ENCODE measurements at regions of chr1 and their contacts with region 1.

Region 1: DNA sequence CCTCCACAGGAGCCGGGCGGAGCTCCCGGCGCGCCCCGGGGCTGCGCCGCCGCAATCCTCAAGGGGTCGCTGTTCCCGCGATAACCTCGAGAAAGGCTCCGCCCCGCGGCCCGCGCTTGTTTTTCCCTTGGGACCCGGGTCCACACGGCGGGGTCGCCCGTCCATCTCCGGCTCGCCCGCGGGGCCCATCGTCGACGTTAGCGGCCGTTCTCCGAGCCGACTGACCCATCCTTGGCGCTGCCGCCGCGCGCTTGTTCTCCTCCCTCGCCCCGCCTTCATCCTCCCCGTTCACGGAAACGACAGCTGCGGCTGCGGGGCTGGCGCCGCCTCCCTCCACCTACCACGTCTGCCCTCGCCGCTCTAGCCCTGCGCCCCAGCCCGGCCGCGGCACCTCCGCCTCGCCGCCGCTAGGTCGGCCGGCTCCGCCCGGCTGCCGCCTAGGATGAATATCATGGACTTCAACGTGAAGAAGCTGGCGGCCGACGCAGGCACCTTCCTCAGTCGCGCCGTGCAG is at the start of gene SH3GLB1:
- DNase-seq: peak; percentile 97
- H3K4me3 Mint-ChIP-seq: peak within 1 kb of the TSS; percentile 100
- H3K27ac Mint-ChIP-seq: peak within 1 kb of the TSS; percentile 99
- H3K4me1 Mint-ChIP-seq: peaks cover 33% of the 10 kb centered on the region
- H3K27me3 Mint-ChIP-seq: no peaks in the 10 kb centered on the region
- total RNA-seq, gene SH3GLB1: 57.0 and 59.7 TPM in 2 replicates

Region 2: GRCh38 chr1:86395771-86396497 is 308.6 kb before region 1 on chr1 and contains the start of gene ODF2L:
- intact Hi-C with region 1: loop called (anchors 1 kb)
- DNase-seq: peak; percentile 97
- H3K4me3 Mint-ChIP-seq: peak within 1 kb of the TSS; percentile 94
- H3K27ac Mint-ChIP-seq: peak within 1 kb of the TSS; percentile 98
- H3K4me1 Mint-ChIP-seq: peaks cover 37% of the 10 kb centered on the region
- H3K27me3 Mint-ChIP-seq: peaks cover 13% of the 10 kb centered on the region
- total RNA-seq, gene ODF2L: 16.0 and 23.3 TPM in 2 replicates

Region 3: DNA sequence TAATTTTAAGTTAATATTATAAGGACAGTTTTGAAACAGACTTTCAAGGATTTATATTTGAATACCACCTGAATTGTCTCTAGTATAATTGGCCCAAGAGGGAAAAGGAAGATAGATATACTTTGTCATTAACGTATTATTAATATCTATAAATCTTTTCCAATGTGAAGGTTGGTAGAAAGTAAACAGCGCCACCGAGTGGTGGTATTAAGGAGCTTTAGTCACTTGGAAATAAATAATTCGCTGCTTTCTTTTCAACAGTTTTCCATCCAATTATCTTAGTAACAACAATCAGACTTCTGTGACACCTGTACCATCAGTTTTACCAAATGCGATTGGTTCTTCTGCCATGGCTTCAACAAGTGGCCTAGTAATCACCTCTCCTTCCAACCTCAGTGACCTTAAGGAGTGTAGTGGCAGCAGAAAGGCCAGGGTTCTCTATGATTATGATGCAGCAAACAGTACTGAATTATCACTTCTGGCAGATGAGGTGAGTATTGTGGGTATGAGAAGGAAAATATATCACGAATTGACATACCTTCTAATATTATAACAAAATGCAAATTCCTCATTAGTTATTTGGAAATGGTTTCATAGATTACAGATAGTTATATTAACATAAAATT is 37.5 kb after region 1 on chr1:
- intact Hi-C with region 1: loop called (anchors 1 kb)
- DNase-seq: peak; percentile 72
- H3K4me3 Mint-ChIP-seq: no peak overlapping the region
- H3K27ac Mint-ChIP-seq: no peak overlapping the region
- H3K4me1 Mint-ChIP-seq: peaks cover 4% of the 10 kb centered on the region
- H3K27me3 Mint-ChIP-seq: no peaks in the 10 kb centered on the region

Region 4: DNA sequence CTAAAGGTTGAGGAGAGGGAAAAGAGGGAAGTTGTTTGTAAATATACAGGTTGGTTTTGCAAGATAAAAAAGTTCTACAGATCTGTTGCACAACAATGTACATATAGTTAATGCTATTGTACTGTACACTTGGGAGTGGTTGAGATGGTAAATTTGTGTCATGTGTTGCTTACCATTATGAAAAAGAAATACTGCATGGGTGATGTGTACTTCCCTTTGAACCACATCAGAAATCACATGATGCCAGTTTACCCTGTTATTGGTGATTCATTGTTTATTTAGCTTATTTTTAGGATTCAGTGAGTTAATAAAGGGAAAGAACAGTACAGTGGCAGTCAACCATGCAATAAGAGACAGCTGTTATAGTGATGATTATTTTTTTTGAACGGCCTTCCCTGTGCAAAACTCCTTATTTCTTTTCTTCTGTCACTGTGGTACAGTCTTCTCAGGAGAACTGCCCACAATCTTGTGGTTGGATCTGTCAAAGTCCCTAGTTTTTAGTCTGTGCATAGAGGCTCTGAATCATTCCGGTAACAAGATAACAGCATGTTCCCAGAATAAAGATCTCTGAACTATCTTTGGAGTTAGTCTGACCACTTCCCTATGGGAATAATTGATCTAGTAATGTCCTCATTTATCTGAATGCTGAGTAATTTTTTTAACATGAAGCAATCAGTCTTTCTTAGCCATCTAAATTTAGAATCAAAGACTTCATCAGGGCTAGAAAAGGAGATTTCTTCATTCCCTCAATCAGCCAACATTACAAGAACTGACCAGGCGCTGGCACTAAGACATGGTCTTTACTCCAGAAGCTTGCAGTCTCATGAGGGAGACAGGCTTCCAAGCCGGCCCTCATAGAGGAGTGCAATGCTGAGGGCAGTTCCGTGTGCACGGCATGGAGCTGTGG is 84.0 kb after region 1 on chr1:
- intact Hi-C with region 1: no loop called
- DNase-seq: no peak
- H3K4me3 Mint-ChIP-seq: no peak overlapping the region
- H3K27ac Mint-ChIP-seq: no peak overlapping the region
- H3K4me1 Mint-ChIP-seq: peaks cover 4% of the 10 kb centered on the region
- H3K27me3 Mint-ChIP-seq: no peaks in the 10 kb centered on the region

Region 5: DNA sequence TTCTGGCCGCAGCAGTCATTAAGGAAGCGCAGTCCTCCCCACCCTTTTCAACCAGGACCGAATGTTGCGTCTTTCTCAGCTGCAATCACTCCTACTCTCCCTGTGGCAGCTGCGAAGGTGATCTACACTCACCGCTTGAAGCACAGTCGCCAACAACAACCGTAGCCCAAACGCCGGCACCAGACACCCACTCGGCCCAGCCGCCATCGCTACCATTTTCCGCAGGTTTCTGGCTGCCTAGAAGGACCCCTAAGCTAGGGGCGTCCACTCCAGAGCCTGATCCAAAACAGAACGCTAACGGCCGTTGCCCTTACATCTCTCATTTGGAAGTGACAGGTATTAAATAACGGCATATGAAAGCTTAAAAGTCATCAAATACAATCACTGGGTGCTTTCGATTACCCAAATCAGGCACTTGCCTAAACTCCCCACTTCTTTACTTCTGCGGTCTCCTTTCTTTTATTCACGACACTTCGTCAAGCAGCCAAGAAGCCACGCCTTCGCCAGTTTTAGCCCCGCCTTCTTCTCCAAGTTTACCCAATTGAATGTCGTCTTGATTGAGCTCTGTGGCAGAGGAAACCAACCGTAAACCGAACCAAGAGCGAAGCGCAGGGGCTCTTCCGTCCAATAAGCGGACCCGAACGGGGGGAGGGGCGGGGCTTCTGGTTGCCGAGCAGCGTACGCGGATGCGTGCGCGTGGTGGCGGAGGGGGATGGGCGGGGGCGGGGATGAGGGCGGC is 209.6 kb after region 1 on chr1 and contains the start of gene SELENOF:
- intact Hi-C with region 1: loop called (anchors 1 kb)
- DNase-seq: peak; percentile 100
- H3K4me3 Mint-ChIP-seq: no peak within 1 kb of the TSS
- H3K27ac Mint-ChIP-seq: no peak within 1 kb of the TSS
- H3K4me1 Mint-ChIP-seq: peaks cover 33% of the 10 kb centered on the region
- H3K27me3 Mint-ChIP-seq: no peaks in the 10 kb centered on the region
- total RNA-seq, gene SELENOF: 179 and 184 TPM in 2 replicates

Region 6: GRCh38 chr1:87084244-87084836 is 379.8 kb after region 1 on chr1:
- intact Hi-C with region 1: loop called (anchors 10 kb)
- DNase-seq: no peak
- H3K4me3 Mint-ChIP-seq: no peak overlapping the region
- H3K27ac Mint-ChIP-seq: no peak overlapping the region
- H3K4me1 Mint-ChIP-seq: peaks cover 4% of the 10 kb centered on the region
- H3K27me3 Mint-ChIP-seq: no peaks in the 10 kb centered on the region

Region 7: GRCh38 chr1:87328272-87329050 is 623.9 kb after region 1 on chr1 and contains the start of gene LMO4:
- intact Hi-C with region 1: loop called (anchors 10 kb)
- DNase-seq: peak; percentile 94
- H3K4me3 Mint-ChIP-seq: peak within 1 kb of the TSS; percentile 89
- H3K27ac Mint-ChIP-seq: peak within 1 kb of the TSS; percentile 94
- H3K4me1 Mint-ChIP-seq: peaks cover 35% of the 10 kb centered on the region
- H3K27me3 Mint-ChIP-seq: peaks cover 9% of the 10 kb centered on the region
- total RNA-seq, gene LMO4: 23.7 and 26.1 TPM in 2 replicates